PC-9 (cell line): ENCODE measurements at regions of chr14 and their contacts with region 1.

Region 1: DNA sequence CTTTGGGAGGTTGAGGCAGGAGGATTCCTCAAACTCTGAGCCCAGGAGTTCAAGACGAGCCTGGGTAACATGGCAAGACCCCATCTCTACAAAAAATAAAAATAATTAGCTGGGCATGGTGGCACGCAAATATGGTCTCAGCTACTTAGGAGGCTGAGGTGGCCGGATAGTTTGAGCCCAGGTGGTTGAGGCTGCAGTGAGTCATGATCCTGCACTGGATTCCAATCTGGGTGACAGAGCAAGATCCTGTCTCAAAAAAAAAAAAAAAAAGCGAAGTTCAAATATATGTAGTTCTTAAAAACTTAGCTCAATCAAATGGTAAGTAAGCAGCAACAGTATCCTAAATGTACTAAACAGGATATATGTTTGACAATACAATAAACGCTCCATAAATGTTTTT is 85.5 kb upstream of the SSTR1 start:
- DNase-seq: no peak
- H3K4me3 ChIP-seq: no peak overlapping the region
- H3K27ac ChIP-seq: no peak overlapping the region
- H3K4me1 ChIP-seq: peaks cover 7% of the 10 kb centered on the region
- H3K27me3 ChIP-seq: no peaks in the 10 kb centered on the region
- CTCF ChIP-seq: no peak

Region 2: DNA sequence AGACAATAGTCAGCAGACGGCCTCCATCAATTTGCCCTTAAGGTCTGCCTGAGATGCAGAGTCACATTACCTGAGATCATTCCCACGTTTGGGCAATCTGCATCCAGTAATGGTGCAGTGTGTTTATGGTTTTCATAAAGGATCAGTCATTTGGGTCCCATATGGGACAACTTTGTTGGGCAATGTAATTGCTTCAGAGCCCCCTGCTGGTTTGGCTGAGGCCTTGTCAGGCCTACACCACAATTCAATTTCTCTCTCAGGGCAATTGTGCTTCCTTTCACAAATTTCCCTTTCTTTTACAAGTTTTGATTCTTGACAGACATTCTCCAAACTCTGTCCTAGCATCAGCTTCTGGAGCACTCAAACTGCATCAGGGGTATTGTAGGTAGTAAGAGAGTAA is 105.7 kb before region 1 on chr14:
- CTCF ChIA-PET with region 1: no interaction called
- POLR2A ChIA-PET with region 1: interaction called, 10 read pairs
- intact Hi-C with region 1: no loop called
- DNase-seq: no peak
- H3K4me3 ChIP-seq: no peak overlapping the region
- H3K27ac ChIP-seq: no peak overlapping the region
- H3K4me1 ChIP-seq: no peaks in the 10 kb centered on the region; the same call in 1 of the 2 replicates
- H3K27me3 ChIP-seq: no peaks in the 10 kb centered on the region
- CTCF ChIP-seq: peak; percentile 34; the same call in 1 of the 2 replicates